ENCODE measurements at regions of chr5 and their contacts with region 1.

Region 1: DNA sequence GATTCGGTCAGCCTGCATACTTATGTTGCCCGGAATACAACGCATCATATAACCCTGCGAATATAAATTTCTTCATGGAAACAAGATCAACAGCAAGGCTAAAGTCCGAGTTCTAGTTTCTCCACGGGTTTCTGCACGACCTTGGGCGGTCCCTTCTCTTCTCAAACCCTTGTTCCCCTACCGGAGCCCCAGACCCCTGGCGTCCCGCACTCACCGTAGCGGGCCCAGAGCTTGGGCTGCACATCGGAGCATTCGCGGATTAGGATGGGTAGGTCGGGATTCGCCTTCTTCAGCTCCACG is 438 bp downstream of the NDUFA2 start:
- DNase-seq: no peak
- H3K4me3 Mint-ChIP-seq: peak overlapping the region; percentile 100
- H3K27ac Mint-ChIP-seq: peak overlapping the region; percentile 99
- H3K4me1 Mint-ChIP-seq: peaks cover 40% of the 10 kb centered on the region
- H3K27me3 Mint-ChIP-seq: no peaks in the 10 kb centered on the region

Region 2: GRCh38 chr5:140372971-140373487 is 274.0 kb before region 1 on chr5:
- CTCF ChIA-PET with region 1: interaction called, 14 read pairs
- intact Hi-C with region 1: no loop called
- DNase-seq: peak; percentile 58
- H3K4me3 Mint-ChIP-seq: no peak overlapping the region
- H3K27ac Mint-ChIP-seq: no peak overlapping the region
- H3K4me1 Mint-ChIP-seq: peaks cover 2% of the 10 kb centered on the region
- H3K27me3 Mint-ChIP-seq: no peaks in the 10 kb centered on the region

Region 3: GRCh38 chr5:140690941-140691924 is 44.2 kb after region 1 on chr5 and contains the starts of genes HARS1 and HARS2:
- CTCF ChIA-PET with region 1: interaction called, 3 read pairs
- intact Hi-C with region 1: loop called (anchors 1 kb)
- DNase-seq: peak; percentile 92
- H3K4me3 Mint-ChIP-seq: peak within 1 kb of the TSS; percentile 100
- H3K27ac Mint-ChIP-seq: peak within 1 kb of the TSS; percentile 97
- H3K4me1 Mint-ChIP-seq: peaks cover 35% of the 10 kb centered on the region
- H3K27me3 Mint-ChIP-seq: no peaks in the 10 kb centered on the region
- total RNA-seq, gene HARS1: 69.0 to 74.8 TPM
- total RNA-seq, gene HARS2: 27.4 to 29.3 TPM

Region 4: GRCh38 chr5:140700177-140701144 is 53.5 kb after region 1 on chr5 and contains the start of gene ZMAT2:
- CTCF ChIA-PET with region 1: no interaction called
- intact Hi-C with region 1: loop called (anchors 1 kb)
- DNase-seq: peak; percentile 97
- H3K4me3 Mint-ChIP-seq: peak within 1 kb of the TSS; percentile 97
- H3K27ac Mint-ChIP-seq: peak within 1 kb of the TSS; percentile 87
- H3K4me1 Mint-ChIP-seq: peaks cover 24% of the 10 kb centered on the region
- H3K27me3 Mint-ChIP-seq: no peaks in the 10 kb centered on the region
- total RNA-seq, gene ZMAT2: 52.9 to 58.8 TPM

Region 5: GRCh38 chr5:140734354-140734753 is 87.4 kb after region 1 on chr5:
- CTCF ChIA-PET with region 1: no interaction called
- intact Hi-C with region 1: no loop called
- DNase-seq: no peak
- H3K4me3 Mint-ChIP-seq: no peak overlapping the region
- H3K27ac Mint-ChIP-seq: no peak overlapping the region
- H3K4me1 Mint-ChIP-seq: no peaks in the 10 kb centered on the region
- H3K27me3 Mint-ChIP-seq: peaks cover 20% of the 10 kb centered on the region